HAP-1 (cell line): ENCODE measurements at regions of chr12 and their contacts with region 1.

Region 1: GRCh38 chr12:99619389-99620158 is 28.0 kb upstream of the GARIN6 start:
- DNase-seq: peak; percentile 17 to 44
- H3K4me3 ChIP-seq: no peak overlapping the region
- H3K4me1 ChIP-seq: no peaks in the 10 kb centered on the region
- H3K27me3 ChIP-seq: no peaks in the 10 kb centered on the region

Region 2: DNA sequence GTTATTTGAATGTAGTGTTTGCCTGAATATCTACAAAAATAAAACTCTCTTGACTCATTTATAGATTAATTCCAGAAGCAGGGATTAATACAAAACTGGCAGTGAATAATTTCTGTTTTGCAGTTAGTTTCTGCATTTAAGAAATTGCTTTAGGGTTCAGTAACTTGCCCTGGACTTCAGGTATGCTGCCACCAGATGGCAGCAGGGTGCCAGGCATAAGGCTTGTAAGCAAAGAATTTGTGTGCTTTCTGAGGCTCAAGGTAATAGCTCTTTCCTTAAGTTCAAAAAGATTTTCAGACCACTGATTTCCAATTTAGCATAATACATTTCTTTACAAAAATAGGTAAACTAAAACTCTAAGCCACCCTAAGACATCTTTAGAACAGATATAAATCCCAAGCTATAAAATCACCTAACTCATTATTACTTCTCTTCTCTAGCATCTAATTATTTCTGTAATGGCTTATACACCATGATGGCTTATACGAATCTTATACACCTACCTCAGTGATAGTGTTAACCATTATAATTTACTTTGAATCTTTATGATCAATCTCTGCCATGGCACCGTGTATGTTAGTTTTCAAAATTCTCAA is 576.2 kb before region 1 on chr12:
- in situ Hi-C with region 1: loop called (anchors 25 kb)
- DNase-seq: peak; percentile 50 to 72
- H3K4me3 ChIP-seq: no peak overlapping the region
- H3K4me1 ChIP-seq: no peaks in the 10 kb centered on the region
- H3K27me3 ChIP-seq: peaks cover 3% of the 10 kb centered on the region

Region 3: DNA sequence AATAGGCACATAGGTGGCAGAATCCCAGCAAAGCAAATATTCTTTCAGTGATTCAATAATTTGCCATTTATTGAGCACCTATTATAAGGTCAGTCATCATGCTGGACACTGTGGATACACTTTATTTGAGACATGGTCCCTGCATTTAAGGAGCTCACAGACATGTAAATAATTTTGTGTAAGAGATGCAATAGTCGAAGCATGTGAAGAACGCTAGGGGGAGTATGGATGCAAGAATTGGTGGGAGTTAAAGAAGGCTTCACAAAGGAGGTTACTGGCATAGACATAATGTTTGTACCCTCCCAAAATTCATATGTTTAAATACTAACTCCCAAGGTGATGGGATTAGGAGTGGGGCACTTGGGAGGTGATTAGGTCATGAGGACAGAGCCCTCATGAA is 232.7 kb before region 1 on chr12:
- in situ Hi-C with region 1: loop called (anchors 25 kb)
- DNase-seq: peak; percentile 11 to 58
- H3K4me3 ChIP-seq: no peak overlapping the region
- H3K4me1 ChIP-seq: no peaks in the 10 kb centered on the region
- H3K27me3 ChIP-seq: peaks cover 2% of the 10 kb centered on the region; the same call in 1 of the 2 replicates